ENCODE measurements at regions of chr1 and their contacts with region 1.

Region 1: DNA sequence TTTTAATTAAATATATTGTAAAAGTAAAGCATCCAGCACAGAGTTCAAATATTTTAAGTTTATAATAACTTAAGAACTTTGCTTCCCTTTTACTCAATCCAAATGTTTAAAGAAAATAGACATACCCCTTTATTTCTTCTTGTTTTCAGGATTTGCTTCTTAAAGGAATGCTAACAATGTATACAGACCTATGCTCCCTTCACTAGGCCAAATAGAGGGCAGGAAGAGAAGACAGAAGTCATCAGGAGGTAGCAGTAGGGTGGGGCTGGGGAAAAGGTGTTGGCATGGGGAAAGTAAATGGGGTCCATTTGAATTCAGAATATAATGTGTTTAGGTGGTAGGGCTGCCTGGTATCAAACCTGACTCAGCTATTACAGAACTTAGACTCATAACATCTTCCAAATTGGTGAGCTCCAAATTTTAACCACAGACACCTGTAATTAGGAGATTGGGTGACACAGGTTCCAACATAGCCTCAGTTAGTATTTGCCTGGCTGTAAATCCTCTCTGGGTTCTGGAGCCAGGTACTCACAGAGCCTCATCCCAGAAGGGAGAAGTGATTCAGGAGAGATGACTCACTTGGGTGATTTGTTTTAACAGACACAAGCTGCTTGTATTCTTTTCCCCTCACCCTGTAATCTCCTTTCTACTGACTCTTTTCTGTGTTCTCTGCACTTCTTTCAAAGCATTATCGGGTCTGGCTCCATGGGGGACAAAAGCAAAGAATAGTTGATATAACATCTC is 60.1 kb upstream of the DUSP10 start:
- DNase-seq: no peak
- CTCF ChIP-seq: no peak

Region 2: GRCh38 chr1:221816899-221817298 is 15.0 kb after region 1 on chr1:
- CTCF ChIA-PET with region 1: interaction called, 11 read pairs
- POLR2A ChIA-PET with region 1: no interaction called
- DNase-seq: no peak
- CTCF ChIP-seq: no peak

Measured in GM10248 (cell line).